RWPE1 (cell line): ENCODE measurements at regions of chr1 and their contacts with region 1.

Region 1: DNA sequence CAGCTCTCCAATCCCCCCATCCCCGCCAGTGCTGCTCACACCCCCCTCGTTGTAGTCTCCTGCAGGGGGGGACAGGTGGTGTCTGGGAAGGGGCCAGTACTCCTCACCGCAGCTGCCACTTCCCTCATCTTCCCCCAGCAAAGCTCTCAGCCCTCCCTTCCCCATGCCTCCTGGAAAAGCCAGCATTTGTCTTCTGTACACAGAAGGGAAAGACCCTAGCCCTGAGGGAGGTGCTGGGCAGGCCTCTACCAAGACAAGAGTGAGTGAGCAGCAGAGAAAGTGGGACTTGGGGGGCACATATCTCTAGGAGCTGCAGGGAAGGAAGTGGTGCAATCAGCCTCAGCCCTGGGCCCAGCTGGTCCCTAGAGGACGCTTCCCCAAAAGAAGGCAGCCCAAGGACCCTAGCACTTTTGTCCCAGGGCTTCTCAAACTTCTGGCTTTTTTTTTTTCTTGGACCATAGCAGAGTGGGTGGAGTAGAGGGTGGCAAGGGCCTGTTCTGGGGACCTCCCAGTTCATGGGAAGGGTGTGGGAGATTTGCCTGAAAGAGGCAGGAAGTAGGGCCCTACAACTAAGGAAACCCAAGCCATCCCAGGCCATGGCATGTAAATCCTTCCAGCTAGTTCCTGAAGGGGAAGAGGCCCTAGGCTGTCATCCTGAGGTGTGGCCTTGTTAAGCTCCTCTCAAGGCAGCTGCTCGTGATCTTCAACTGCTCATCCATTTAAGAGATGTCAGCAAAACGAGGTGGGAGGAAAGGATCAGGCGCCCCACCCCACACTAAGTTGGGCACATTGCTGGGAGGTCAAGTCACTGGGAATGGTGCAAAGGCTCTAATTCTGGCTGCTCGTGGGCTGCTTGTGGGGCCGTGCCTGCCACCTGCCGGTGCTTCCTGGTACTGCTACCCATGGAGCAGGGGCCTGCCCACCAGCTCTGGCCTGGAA is 12.6 kb downstream of the ZC3H12A start:
- DNase-seq: peak; percentile 67
- H3K27ac ChIP-seq: peak overlapping the region; percentile 100
- CTCF ChIP-seq: peak; percentile 97

Region 2: GRCh38 chr1:37434292-37434907 is 52.5 kb before region 1 on chr1:
- CTCF ChIA-PET with region 1: interaction called, 11 read pairs
- POLR2A ChIA-PET with region 1: no interaction called
- DNase-seq: peak; percentile 78
- H3K27ac ChIP-seq: no peak overlapping the region
- CTCF ChIP-seq: peak; percentile 89

Region 3: DNA sequence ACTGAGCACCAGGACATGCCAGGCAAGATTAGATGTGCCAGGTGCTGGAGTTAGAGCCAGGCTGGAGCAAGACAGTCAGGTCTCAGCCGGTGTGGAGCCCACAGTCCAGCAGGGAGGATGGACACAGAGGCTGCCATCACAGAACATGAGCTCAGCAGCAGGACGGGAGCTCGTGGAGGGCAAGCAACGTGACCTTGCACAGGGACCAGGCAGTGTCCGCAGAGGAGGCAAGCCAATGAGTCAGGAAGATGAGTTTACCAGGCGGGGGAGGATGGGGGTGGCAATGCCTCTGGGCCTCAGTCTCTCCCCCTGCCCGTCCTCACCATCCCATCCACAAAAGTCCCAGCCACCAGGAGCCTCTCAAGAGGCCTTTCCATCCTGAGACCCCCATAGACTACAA is 33.3 kb before region 1 on chr1:
- CTCF ChIA-PET with region 1: interaction called, 43 read pairs
- POLR2A ChIA-PET with region 1: interaction called, 3 read pairs
- DNase-seq: no peak
- H3K27ac ChIP-seq: peak overlapping the region; percentile 92
- CTCF ChIP-seq: no peak

Region 4: GRCh38 chr1:37474046-37474759 is 12.7 kb before region 1 on chr1 and contains the start of gene ZC3H12A:
- CTCF ChIA-PET with region 1: interaction called, 32 read pairs
- POLR2A ChIA-PET with region 1: interaction called, 19 read pairs
- DNase-seq: peak; percentile 93
- H3K27ac ChIP-seq: peak within 1 kb of the TSS; percentile 100
- CTCF ChIP-seq: no peak

Region 5: DNA sequence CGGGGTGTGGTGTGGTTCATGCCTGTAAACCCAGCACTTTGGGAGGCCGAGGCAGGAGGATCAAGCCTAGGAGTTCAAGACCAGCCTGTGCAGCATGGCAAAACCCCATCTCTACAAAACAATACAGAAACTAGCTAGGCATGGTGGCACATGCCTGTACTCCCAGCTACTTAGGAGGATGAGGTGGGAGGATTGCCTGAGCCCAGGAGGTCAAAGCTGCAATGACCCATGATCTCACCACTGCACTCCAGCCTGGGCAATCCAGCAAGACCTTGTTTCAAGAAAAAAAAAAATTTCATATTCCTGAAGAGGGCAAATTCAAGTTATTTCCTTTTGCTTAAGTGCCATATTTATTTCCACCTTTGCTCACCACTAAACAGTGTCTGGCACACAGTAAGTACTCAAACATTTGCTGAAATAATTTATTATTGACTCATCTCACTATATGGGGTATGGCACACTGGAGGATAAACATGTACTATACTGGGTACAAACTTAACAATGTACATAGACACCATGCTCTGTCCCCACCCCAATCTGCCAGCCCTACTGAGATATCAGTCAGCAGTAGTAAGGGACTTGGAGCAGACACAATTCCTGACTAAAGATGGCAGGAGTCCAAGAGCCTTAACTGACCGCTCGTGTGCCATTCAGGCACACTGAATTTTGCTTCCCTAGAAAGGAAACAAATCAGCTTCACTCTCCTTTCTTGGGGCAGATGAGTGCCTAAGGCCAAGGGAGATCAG is 12.1 kb after region 1 on chr1:
- CTCF ChIA-PET with region 1: interaction called, 15 read pairs
- POLR2A ChIA-PET with region 1: no interaction called
- DNase-seq: no peak
- H3K27ac ChIP-seq: peak overlapping the region; percentile 70
- CTCF ChIP-seq: no peak

Region 6: GRCh38 chr1:37514350-37515184 is 27.6 kb after region 1 on chr1 and contains the start of gene MEAF6:
- CTCF ChIA-PET with region 1: interaction called, 15 read pairs
- POLR2A ChIA-PET with region 1: no interaction called
- DNase-seq: peak; percentile 84
- H3K27ac ChIP-seq: peak within 1 kb of the TSS; percentile 92
- CTCF ChIP-seq: peak; percentile 82